ENCODE measurements at regions of chr4 and their contacts with region 1.

Region 1: DNA sequence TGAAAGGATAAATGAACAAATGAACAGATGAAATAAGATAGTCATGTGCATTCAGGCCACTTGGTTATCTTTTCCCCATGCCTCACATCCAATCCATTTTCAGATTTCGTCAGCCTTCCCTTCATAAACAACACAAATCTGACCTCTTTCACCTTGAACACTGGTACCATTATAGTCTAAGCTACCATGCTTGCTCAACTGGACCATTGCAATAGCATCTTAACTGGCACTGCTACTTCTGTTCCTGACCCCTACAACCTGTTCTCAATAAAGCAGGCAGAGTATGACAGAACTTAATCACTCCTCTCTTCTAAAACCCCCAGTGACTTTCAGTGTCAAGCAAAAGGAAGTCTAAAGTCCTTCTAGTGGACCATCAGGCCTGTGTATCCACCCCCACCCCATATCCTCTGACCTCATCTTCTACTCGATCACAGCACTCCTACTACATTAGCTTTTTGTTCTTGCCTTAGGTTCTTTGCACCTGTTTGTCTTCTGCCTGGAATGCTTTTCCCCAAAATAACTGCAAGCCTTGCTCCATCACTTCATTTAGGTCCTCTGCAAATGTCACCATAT is 40.7 kb downstream of the LARP7 start:
- DNase-seq: no peak
- ATAC-seq: no peak
- H3K4me3 ChIP-seq: no peak overlapping the region
- H3K27ac ChIP-seq: no peak overlapping the region
- H3K4me1 ChIP-seq: no peaks in the 10 kb centered on the region
- H3K27me3 ChIP-seq: no peaks in the 10 kb centered on the region; the same call in 1 of the 2 replicates
- CTCF ChIP-seq: no peak

Region 2: GRCh38 chr4:112222219-112222955 is 455.2 kb before region 1 on chr4:
- CTCF ChIA-PET with region 1: no interaction called
- POLR2A ChIA-PET with region 1: interaction called, 13 read pairs
- in situ Hi-C with region 1: no loop called
- intact Hi-C with region 1: no loop called
- DNase-seq: no peak
- ATAC-seq: no peak
- H3K4me3 ChIP-seq: no peak overlapping the region
- H3K27ac ChIP-seq: no peak overlapping the region
- H3K4me1 ChIP-seq: no peaks in the 10 kb centered on the region
- H3K27me3 ChIP-seq: no peaks in the 10 kb centered on the region
- CTCF ChIP-seq: no peak

Region 3: DNA sequence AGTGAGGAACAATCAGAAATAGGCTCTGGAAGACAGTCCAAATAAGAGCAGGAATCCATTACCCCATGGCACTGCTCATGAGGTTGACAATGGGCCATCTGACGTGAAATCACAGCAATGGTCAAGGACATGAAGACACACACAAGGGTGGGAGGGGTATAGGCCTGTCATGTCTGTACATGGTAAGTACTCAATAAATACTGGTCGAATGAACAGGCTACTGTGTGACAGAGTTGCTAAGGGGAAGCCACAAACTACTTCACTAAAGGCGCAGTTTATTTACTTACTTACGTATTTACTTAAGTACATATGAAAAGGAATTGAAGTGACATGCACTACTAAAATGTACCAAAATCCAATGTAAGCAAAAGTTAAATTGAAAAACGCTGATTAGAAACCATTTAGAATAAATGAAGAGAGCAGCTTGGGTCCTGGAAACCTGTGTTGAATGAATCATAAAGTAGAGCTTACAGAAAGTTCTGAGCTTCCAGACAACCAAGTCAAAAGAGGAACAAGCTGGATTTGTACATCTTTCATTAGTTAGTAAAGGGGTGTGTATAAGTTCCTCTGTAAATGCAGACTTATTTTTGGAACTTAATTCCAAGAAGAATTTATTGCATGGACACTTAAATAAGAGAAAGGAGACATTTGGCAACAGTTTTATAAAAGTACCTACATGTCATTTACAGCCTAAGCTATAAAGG is 347.8 kb before region 1 on chr4:
- CTCF ChIA-PET with region 1: no interaction called
- POLR2A ChIA-PET with region 1: no interaction called
- in situ Hi-C with region 1: no loop called
- intact Hi-C with region 1: no loop called
- DNase-seq: no peak
- ATAC-seq: no peak
- H3K4me3 ChIP-seq: no peak overlapping the region
- H3K27ac ChIP-seq: no peak overlapping the region
- H3K4me1 ChIP-seq: no peaks in the 10 kb centered on the region
- H3K27me3 ChIP-seq: no peaks in the 10 kb centered on the region
- CTCF ChIP-seq: no peak

Region 4: GRCh38 chr4:113145147-113145518 is 467.5 kb after region 1 on chr4:
- CTCF ChIA-PET with region 1: no interaction called
- POLR2A ChIA-PET with region 1: interaction called, 16 read pairs
- in situ Hi-C with region 1: no loop called
- intact Hi-C with region 1: no loop called
- DNase-seq: no peak
- ATAC-seq: no peak
- H3K4me3 ChIP-seq: no peak overlapping the region
- H3K27ac ChIP-seq: no peak overlapping the region
- H3K4me1 ChIP-seq: peaks cover 7% of the 10 kb centered on the region; the same call in 1 of the 2 replicates
- H3K27me3 ChIP-seq: no peaks in the 10 kb centered on the region
- CTCF ChIP-seq: no peak

Measured in Panc1 (cell line).